B cell (primary cell): ENCODE measurements at regions of chr13 and their contacts with region 1.

Region 1: GRCh38 chr13:77480066-77480465 is 55.4 kb upstream of the SCEL start:
- DNase-seq: no peak
- ATAC-seq: no peak
- H3K4me3 ChIP-seq: no peak overlapping the region
- H3K4me3 Mint-ChIP-seq: no peak overlapping the region
- H3K27ac ChIP-seq: no peak overlapping the region
- H3K27ac Mint-ChIP-seq: no peak overlapping the region
- H3K4me1 ChIP-seq: peaks cover 5 to 6% of the 10 kb centered on the region in 2 donors
- H3K4me1 Mint-ChIP-seq: peaks cover 13% of the 10 kb centered on the region
- H3K27me3 ChIP-seq: no peaks in the 10 kb centered on the region
- H3K27me3 Mint-ChIP-seq: no peaks in the 10 kb centered on the region
- CTCF ChIP-seq: no peak

Region 2: GRCh38 chr13:77239312-77239711 is 240.8 kb before region 1 on chr13:
- CTCF ChIA-PET with region 1: interaction called, 14 read pairs
- POLR2A ChIA-PET with region 1: no interaction called
- intact Hi-C with region 1: no loop called
- DNase-seq: no peak
- ATAC-seq: no peak
- H3K4me3 ChIP-seq: no peak overlapping the region
- H3K4me3 Mint-ChIP-seq: no peak overlapping the region
- H3K27ac ChIP-seq: no peak overlapping the region
- H3K27ac Mint-ChIP-seq: peak overlapping the region; percentile 32
- H3K4me1 ChIP-seq: no peaks in the 10 kb centered on the region
- H3K4me1 Mint-ChIP-seq: no peaks in the 10 kb centered on the region
- H3K27me3 ChIP-seq: no peaks in the 10 kb centered on the region
- H3K27me3 Mint-ChIP-seq: no peaks in the 10 kb centered on the region
- CTCF ChIP-seq: no peak

Region 3: DNA sequence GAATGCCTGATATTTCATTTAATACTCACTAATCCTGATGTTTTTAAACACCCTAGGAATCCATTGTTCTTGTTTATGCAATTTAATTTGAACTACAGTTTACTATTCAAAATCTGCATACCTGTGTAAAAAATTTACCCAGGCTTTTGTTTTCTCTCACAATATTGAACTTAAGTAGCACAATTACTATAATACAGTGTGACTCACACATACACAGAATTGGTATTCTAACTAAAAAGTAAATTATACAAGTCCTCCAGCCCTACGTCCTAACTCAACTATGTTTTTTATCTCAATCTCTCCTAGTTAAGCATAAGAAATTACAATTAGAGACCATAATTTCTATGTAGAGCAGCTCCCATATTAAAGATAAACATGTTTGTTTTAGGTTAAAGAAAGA is 195.0 kb before region 1 on chr13:
- CTCF ChIA-PET with region 1: interaction called, 16 read pairs
- POLR2A ChIA-PET with region 1: no interaction called
- intact Hi-C with region 1: no loop called
- DNase-seq: no peak
- ATAC-seq: no peak
- H3K4me3 ChIP-seq: no peak overlapping the region
- H3K4me3 Mint-ChIP-seq: no peak overlapping the region
- H3K27ac ChIP-seq: no peak overlapping the region
- H3K27ac Mint-ChIP-seq: no peak overlapping the region
- H3K4me1 ChIP-seq: no peaks in the 10 kb centered on the region
- H3K4me1 Mint-ChIP-seq: peaks cover 8% of the 10 kb centered on the region
- H3K27me3 ChIP-seq: no peaks in the 10 kb centered on the region
- H3K27me3 Mint-ChIP-seq: no peaks in the 10 kb centered on the region
- CTCF ChIP-seq: no peak

Region 4: DNA sequence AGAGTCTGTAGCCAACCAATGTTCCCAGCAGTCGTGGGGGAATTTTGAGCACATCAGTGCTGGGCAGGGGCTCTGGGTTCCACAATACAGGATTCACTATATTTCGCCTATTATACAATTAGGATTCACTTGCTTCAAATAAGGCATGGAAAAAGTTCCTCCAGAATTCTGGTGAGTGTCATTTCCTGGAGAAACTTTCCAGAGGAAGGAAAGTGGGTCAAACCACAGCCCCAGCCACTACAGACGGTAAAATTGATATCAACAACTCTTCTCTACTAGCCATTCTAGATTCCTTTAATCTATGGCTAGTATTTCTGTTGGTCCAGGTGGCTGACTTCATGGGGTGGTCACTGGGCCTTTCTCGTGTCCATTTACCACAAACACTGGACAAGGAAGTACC is 163.6 kb before region 1 on chr13:
- CTCF ChIA-PET with region 1: interaction called, 18 read pairs
- POLR2A ChIA-PET with region 1: no interaction called
- intact Hi-C with region 1: no loop called
- DNase-seq: no peak
- ATAC-seq: no peak
- H3K4me3 ChIP-seq: no peak overlapping the region
- H3K4me3 Mint-ChIP-seq: no peak overlapping the region
- H3K27ac ChIP-seq: peak overlapping the region in 1 of 2 donors; percentile 38
- H3K27ac Mint-ChIP-seq: peak overlapping the region; percentile 23
- H3K4me1 ChIP-seq: peaks cover 39 to 63% of the 10 kb centered on the region in 2 donors
- H3K4me1 Mint-ChIP-seq: peaks cover 81% of the 10 kb centered on the region
- H3K27me3 ChIP-seq: no peaks in the 10 kb centered on the region
- H3K27me3 Mint-ChIP-seq: no peaks in the 10 kb centered on the region
- CTCF ChIP-seq: no peak

Region 5: GRCh38 chr13:77415253-77416071 is 64.6 kb before region 1 on chr13:
- CTCF ChIA-PET with region 1: interaction called, 12 read pairs
- POLR2A ChIA-PET with region 1: no interaction called
- intact Hi-C with region 1: no loop called
- DNase-seq: peak; percentile 65
- ATAC-seq: peak; percentile 87
- H3K4me3 ChIP-seq: no peak overlapping the region
- H3K4me3 Mint-ChIP-seq: peak overlapping the region; percentile 24
- H3K27ac ChIP-seq: peak overlapping the region; percentile 68 to 77
- H3K27ac Mint-ChIP-seq: peak overlapping the region; percentile 93
- H3K4me1 ChIP-seq: peaks cover 26 to 28% of the 10 kb centered on the region in 2 donors
- H3K4me1 Mint-ChIP-seq: peaks cover 33% of the 10 kb centered on the region
- H3K27me3 ChIP-seq: no peaks in the 10 kb centered on the region
- H3K27me3 Mint-ChIP-seq: no peaks in the 10 kb centered on the region
- CTCF ChIP-seq: no peak

Region 6: DNA sequence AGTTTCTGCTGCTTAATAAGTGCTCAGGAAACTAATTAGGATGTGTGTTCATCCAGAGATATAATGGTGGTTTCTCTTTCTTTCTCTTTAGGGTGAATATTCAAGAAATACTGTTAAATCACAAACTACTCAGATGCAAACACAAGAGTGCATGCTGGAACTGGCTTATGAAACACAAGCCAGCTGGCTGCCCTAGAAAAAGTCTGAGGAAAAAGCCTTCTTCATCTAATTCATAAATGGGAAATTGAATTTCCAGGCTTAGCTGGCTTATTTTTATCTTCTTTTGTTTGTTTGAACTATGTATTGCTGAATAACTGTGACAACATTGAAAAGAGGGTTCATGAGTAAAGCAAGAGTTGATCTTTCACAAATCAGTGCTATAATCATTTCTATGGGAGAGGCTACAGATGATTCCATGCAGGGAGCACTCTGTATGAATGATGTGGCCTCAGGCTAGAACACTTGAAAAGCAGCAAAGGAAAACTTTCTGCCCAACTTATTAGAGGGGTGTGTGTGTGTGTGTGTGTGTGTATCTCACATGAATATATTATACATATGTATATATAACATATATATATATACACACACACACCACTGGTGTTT is 14.4 kb before region 1 on chr13:
- CTCF ChIA-PET with region 1: no interaction called
- POLR2A ChIA-PET with region 1: no interaction called
- intact Hi-C with region 1: no loop called
- DNase-seq: no peak
- ATAC-seq: no peak
- H3K4me3 ChIP-seq: no peak overlapping the region
- H3K4me3 Mint-ChIP-seq: no peak overlapping the region
- H3K27ac ChIP-seq: no peak overlapping the region
- H3K27ac Mint-ChIP-seq: no peak overlapping the region
- H3K4me1 ChIP-seq: no peaks in the 10 kb centered on the region
- H3K4me1 Mint-ChIP-seq: peaks cover under 1% of the 10 kb centered on the region
- H3K27me3 ChIP-seq: no peaks in the 10 kb centered on the region
- H3K27me3 Mint-ChIP-seq: no peaks in the 10 kb centered on the region
- CTCF ChIP-seq: no peak

Region 7: GRCh38 chr13:77565635-77566034 is 85.6 kb after region 1 on chr13:
- CTCF ChIA-PET with region 1: interaction called, 15 read pairs
- POLR2A ChIA-PET with region 1: no interaction called
- intact Hi-C with region 1: no loop called
- DNase-seq: peak; percentile 48
- ATAC-seq: peak; percentile 51
- H3K4me3 ChIP-seq: no peak overlapping the region
- H3K4me3 Mint-ChIP-seq: no peak overlapping the region
- H3K27ac ChIP-seq: no peak overlapping the region
- H3K27ac Mint-ChIP-seq: no peak overlapping the region
- H3K4me1 ChIP-seq: no peaks in the 10 kb centered on the region
- H3K4me1 Mint-ChIP-seq: no peaks in the 10 kb centered on the region
- H3K27me3 ChIP-seq: no peaks in the 10 kb centered on the region
- H3K27me3 Mint-ChIP-seq: peaks cover 8% of the 10 kb centered on the region
- CTCF ChIP-seq: peak; percentile 72